Activated CD4-positive, alpha-beta T cell treated with anti-CD3 and anti-CD28 coated beads, Interleukin-2, amount 10 ng/mL, durations not matched to agents 7 days and 5 days (primary cell): ENCODE measurements at regions of chr10 and their contacts with region 1.

Region 1: GRCh38 chr10:101080933-101081931 is 19.4 kb downstream of the KAZALD1 start:
- DNase-seq: no peak
- H3K4me3 Mint-ChIP-seq: no peak overlapping the region
- H3K27ac Mint-ChIP-seq: no peak overlapping the region
- H3K4me1 Mint-ChIP-seq: no peaks in the 10 kb centered on the region
- H3K27me3 Mint-ChIP-seq: peaks cover 35% of the 10 kb centered on the region

Region 2: GRCh38 chr10:101095542-101096213 is 14.4 kb after region 1 on chr10:
- CTCF ChIA-PET with region 1: interaction called, 21 read pairs
- POLR2A ChIA-PET with region 1: no interaction called
- DNase-seq: peak; percentile 75
- H3K4me3 Mint-ChIP-seq: no peak overlapping the region
- H3K27ac Mint-ChIP-seq: no peak overlapping the region
- H3K4me1 Mint-ChIP-seq: no peaks in the 10 kb centered on the region
- H3K27me3 Mint-ChIP-seq: peaks cover 18% of the 10 kb centered on the region

Region 3: GRCh38 chr10:101120884-101121653 is 39.8 kb after region 1 on chr10:
- CTCF ChIA-PET with region 1: no interaction called
- POLR2A ChIA-PET with region 1: no interaction called
- DNase-seq: peak; percentile 44
- H3K4me3 Mint-ChIP-seq: peak overlapping the region; percentile 85
- H3K27ac Mint-ChIP-seq: peak overlapping the region; percentile 96
- H3K4me1 Mint-ChIP-seq: peaks cover 25% of the 10 kb centered on the region
- H3K27me3 Mint-ChIP-seq: peaks cover 78% of the 10 kb centered on the region

Region 4: GRCh38 chr10:101319241-101319915 is 238.1 kb after region 1 on chr10:
- CTCF ChIA-PET with region 1: no interaction called
- POLR2A ChIA-PET with region 1: no interaction called
- DNase-seq: no peak
- H3K4me3 Mint-ChIP-seq: no peak overlapping the region
- H3K27ac Mint-ChIP-seq: no peak overlapping the region
- H3K4me1 Mint-ChIP-seq: no peaks in the 10 kb centered on the region
- H3K27me3 Mint-ChIP-seq: peaks cover 15% of the 10 kb centered on the region